Activated CD4-positive, alpha-beta T cell treated with anti-CD3 and anti-CD28 coated beads for 36 hours (primary cell): ENCODE measurements at regions of chr12 and their contacts with region 1.

Region 1: DNA sequence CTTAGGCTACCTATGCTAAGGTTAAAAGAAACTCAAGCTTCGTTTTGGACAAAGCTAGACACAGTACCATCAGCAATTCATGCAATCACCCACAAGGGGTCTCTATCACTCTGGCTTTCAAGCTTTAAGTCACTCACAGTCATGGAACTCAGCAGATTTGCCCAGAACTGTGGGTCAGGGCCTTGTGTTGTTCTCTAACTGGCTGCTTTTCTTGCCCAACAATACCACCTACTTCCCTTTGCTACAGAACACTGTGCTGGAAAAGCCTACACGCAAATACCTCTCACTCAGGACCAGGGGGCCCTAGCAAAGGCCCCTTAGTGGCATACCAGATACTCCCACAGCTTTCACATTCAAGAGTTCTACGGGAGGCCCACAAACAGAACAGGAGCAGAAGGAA is 9.1 kb downstream of the NEMP1 start:
- DNase-seq: peak; percentile 74
- ATAC-seq: peak; percentile 73
- H3K4me3 Mint-ChIP-seq: peak overlapping the region; percentile 39
- H3K27ac Mint-ChIP-seq: peak overlapping the region; percentile 89
- H3K4me1 Mint-ChIP-seq: peaks cover 74% of the 10 kb centered on the region
- H3K27me3 Mint-ChIP-seq: no peaks in the 10 kb centered on the region

Region 2: GRCh38 chr12:56468216-56469006 is 601.1 kb before region 1 on chr12 and contains the start of gene SPRYD4:
- CTCF ChIA-PET with region 1: no interaction called
- POLR2A ChIA-PET with region 1: no interaction called
- intact Hi-C with region 1: no loop called
- DNase-seq: peak; percentile 96
- ATAC-seq: peak; percentile 90
- H3K4me3 Mint-ChIP-seq: peak within 1 kb of the TSS; percentile 91
- H3K27ac Mint-ChIP-seq: peak within 1 kb of the TSS; percentile 99
- H3K4me1 Mint-ChIP-seq: peaks cover 40% of the 10 kb centered on the region
- H3K27me3 Mint-ChIP-seq: no peaks in the 10 kb centered on the region
- total RNA-seq, gene SPRYD4: 3.1 TPM

Region 3: GRCh38 chr12:57088459-57089248 is 19.1 kb after region 1 on chr12 and contains the start of gene NAB2:
- CTCF ChIA-PET with region 1: interaction called, 411 read pairs
- POLR2A ChIA-PET with region 1: interaction called, 11 read pairs
- intact Hi-C with region 1: loop called (anchors 1 kb)
- DNase-seq: peak; percentile 95
- ATAC-seq: peak; percentile 49
- H3K4me3 Mint-ChIP-seq: peak within 1 kb of the TSS; percentile 93
- H3K27ac Mint-ChIP-seq: peak within 1 kb of the TSS; percentile 95
- H3K4me1 Mint-ChIP-seq: peaks cover 63% of the 10 kb centered on the region
- H3K27me3 Mint-ChIP-seq: no peaks in the 10 kb centered on the region
- total RNA-seq, gene NAB2: 46.8 to 48.6 TPM

Region 4: GRCh38 chr12:57116580-57117281 is 47.2 kb after region 1 on chr12:
- CTCF ChIA-PET with region 1: interaction called, 103 read pairs
- POLR2A ChIA-PET with region 1: interaction called, 20 read pairs
- intact Hi-C with region 1: loop called (anchors 1 kb)
- DNase-seq: no peak
- ATAC-seq: no peak
- H3K4me3 Mint-ChIP-seq: no peak overlapping the region
- H3K27ac Mint-ChIP-seq: no peak overlapping the region
- H3K4me1 Mint-ChIP-seq: peaks cover 22% of the 10 kb centered on the region
- H3K27me3 Mint-ChIP-seq: no peaks in the 10 kb centered on the region

Region 5: DNA sequence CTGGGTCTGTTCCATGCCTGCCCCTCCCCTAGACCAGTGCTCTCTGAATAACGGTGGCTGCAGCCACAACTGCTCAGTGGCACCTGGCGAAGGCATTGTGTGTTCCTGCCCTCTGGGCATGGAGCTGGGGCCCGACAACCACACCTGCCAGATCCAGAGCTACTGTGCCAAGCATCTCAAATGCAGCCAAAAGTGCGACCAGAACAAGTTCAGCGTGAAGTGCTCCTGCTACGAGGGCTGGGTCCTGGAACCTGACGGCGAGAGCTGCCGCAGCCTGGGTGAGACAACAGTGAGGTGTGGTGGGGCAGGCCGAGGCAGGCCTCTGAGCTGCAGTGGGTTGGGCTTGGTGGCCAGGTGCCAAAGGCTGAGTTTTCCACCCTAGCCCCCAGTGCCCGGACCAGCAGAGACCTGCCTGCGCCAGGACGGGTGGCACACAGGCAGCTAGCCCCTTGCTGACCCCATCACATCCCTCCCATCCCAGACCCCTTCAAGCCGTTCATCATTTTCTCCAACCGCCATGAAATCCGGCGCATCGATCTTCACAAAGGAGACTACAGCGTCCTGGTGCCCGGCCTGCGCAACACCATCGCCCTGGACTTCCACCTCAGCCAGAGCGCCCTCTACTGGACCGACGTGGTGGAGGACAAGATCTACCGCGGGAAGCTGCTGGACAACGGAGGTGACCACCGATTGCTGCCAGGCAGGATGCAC is 106.1 kb after region 1 on chr12:
- CTCF ChIA-PET with region 1: interaction called, 5 read pairs
- POLR2A ChIA-PET with region 1: no interaction called
- intact Hi-C with region 1: loop called in 1 of 2 experiments (anchors 2 kb)
- DNase-seq: peak; percentile 81
- ATAC-seq: peak; percentile 59
- H3K4me3 Mint-ChIP-seq: no peak overlapping the region
- H3K27ac Mint-ChIP-seq: no peak overlapping the region
- H3K4me1 Mint-ChIP-seq: no peaks in the 10 kb centered on the region
- H3K27me3 Mint-ChIP-seq: no peaks in the 10 kb centered on the region

Region 6: DNA sequence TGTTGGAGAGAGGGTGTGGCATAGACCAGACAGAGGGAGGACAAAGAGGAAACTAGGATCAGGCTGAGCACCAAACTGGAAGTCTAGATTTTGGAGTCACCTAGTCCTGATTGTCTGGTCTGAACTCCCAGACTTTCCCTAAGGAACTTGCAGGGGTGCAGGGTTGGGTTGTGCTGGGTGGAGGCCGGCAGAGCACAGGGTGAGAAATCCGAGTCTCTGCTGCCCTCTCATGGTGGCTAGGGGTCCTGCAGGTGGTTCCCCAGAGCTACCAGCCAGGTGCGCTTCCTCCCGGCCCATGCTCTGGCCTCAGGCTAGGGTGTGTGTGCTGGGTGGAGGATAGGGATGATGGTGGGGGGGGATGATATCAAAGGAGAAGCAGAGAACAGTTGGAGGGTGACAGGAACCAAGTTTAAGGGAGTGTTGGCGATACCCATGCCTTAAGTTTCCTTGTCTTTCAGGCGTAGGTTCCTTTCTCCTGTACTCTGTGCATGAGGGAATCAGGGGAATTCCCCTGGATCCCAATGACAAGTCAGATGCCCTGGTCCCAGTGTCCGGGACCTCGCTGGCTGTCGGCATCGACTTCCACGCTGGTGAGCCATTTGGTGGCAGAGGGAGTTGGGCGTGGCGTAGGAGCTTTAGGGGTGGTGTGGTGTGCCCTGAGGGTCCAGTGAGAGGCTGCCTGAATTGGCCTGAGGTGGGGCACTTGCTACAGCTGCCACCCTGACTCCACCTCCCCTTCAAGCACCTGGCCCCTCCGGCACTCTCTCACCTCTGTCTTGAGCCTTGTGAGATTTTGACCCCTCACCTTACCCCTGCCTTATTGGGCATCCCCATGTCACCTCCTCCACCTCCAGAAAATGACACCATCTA is 113.6 kb after region 1 on chr12:
- CTCF ChIA-PET with region 1: interaction called, 15 read pairs
- POLR2A ChIA-PET with region 1: no interaction called
- intact Hi-C with region 1: loop called (anchors 1 to 2 kb)
- DNase-seq: peak; percentile 89
- ATAC-seq: peak; percentile 99
- H3K4me3 Mint-ChIP-seq: no peak overlapping the region
- H3K27ac Mint-ChIP-seq: no peak overlapping the region
- H3K4me1 Mint-ChIP-seq: peaks cover 2% of the 10 kb centered on the region
- H3K27me3 Mint-ChIP-seq: no peaks in the 10 kb centered on the region